ENCODE measurements at regions of chr3 and their contacts with region 1.

Region 1: GRCh38 chr3:63333842-63334241 is 55.7 kb downstream of the SYNPR start:
- DNase-seq: peak; percentile 16
- H3K4me3 Mint-ChIP-seq: no peak overlapping the region
- H3K27ac Mint-ChIP-seq: no peak overlapping the region
- H3K4me1 Mint-ChIP-seq: no peaks in the 10 kb centered on the region
- H3K27me3 Mint-ChIP-seq: peaks cover 70% of the 10 kb centered on the region
- CTCF ChIP-seq: peak; percentile 23

Region 2: DNA sequence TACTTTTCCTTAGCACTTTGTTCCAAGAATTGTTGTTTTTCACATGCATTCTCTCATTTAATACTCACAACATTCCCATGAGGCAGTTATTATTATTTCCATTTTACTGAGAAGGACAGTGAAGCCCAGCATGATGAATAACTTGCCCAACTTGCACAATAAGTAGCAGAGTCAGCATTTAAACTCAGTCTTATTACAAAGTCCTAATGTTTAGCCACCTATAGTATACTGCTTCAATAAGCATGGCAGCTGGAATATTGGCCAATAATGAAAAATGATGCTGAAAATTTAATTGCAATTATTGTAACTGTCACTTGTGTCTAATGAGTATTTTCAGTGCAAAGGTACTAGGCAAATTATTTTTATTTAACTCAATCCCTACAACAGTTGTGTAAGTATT is 10.0 kb before region 1 on chr3:
- CTCF ChIA-PET with region 1: interaction called, 10 read pairs
- POLR2A ChIA-PET with region 1: no interaction called
- intact Hi-C with region 1: no loop called
- DNase-seq: no peak
- H3K4me3 Mint-ChIP-seq: no peak overlapping the region
- H3K27ac Mint-ChIP-seq: no peak overlapping the region
- H3K4me1 Mint-ChIP-seq: no peaks in the 10 kb centered on the region
- H3K27me3 Mint-ChIP-seq: peaks cover 79% of the 10 kb centered on the region
- CTCF ChIP-seq: no peak

Region 3: GRCh38 chr3:63390710-63391230 is 56.9 kb after region 1 on chr3:
- CTCF ChIA-PET with region 1: no interaction called
- POLR2A ChIA-PET with region 1: no interaction called
- intact Hi-C with region 1: no loop called
- DNase-seq: no peak
- H3K4me3 Mint-ChIP-seq: no peak overlapping the region
- H3K27ac Mint-ChIP-seq: no peak overlapping the region
- H3K4me1 Mint-ChIP-seq: no peaks in the 10 kb centered on the region
- H3K27me3 Mint-ChIP-seq: peaks cover 76% of the 10 kb centered on the region
- CTCF ChIP-seq: no peak

Measured in MCF 10A (cell line).